ENCODE measurements at regions of chr6 and their contacts with region 1.

Region 1: GRCh38 chr6:157667211-157668008 is 155.6 kb upstream of the SNX9 start:
- DNase-seq: no peak
- ATAC-seq: no peak

Region 2: GRCh38 chr6:157314705-157315321 is 352.6 kb before region 1 on chr6:
- intact Hi-C with region 1: loop called (anchors 10 kb)
- DNase-seq: no peak
- ATAC-seq: peak; percentile 80

Region 3: DNA sequence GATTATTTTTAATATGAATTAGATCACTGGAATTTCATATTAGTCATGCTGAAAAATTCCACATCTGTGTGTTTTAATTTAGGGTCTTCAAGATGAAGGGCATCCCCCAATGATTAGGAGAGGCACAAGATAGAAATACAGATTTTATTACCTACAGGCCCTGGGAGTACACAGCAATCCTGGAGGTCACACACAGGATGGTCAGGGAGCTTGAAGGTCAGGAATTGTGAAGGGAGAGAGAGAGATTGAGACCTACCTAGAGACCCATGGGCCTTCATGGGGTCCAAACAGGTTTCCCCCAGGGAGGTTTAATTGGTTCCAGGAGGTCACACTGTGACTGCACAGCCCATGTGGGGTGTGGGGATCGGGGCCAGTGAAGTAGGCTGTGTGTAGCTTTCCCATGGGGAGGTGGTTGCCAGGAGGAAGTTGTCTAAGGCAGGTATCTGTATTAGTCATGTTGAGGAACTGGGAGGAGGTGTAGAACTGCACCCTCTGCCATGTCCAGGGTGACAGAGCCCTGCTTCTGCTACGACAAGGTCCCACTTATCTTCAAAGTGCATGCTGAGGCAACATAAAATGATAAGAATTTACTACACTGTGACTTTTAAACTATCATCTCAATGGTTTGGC is 173.9 kb after region 1 on chr6:
- intact Hi-C with region 1: loop called (anchors 10 kb)
- DNase-seq: no peak
- ATAC-seq: no peak